Activated CD4-positive, alpha-beta T cell treated with anti-CD3 and anti-CD28 coated beads, Interleukin-2, amount 10 ng/mL, durations not matched to agents 24 days and 14 days (primary cell): ENCODE measurements at regions of chrX and their contacts with region 1.

Region 1: GRCh38 chrX:13051529-13052172 is 7.2 kb upstream of the FAM9C start:
- DNase-seq: peak; percentile 75
- H3K4me3 Mint-ChIP-seq: peak overlapping the region; percentile 39
- H3K27ac Mint-ChIP-seq: peak overlapping the region; percentile 87
- H3K4me1 Mint-ChIP-seq: peaks cover 45% of the 10 kb centered on the region
- H3K27me3 Mint-ChIP-seq: no peaks in the 10 kb centered on the region

Region 2: GRCh38 chrX:12984629-12985319 is 66.9 kb before region 1 on chrX:
- intact Hi-C with region 1: loop called (anchors 2 kb)
- DNase-seq: peak; percentile 90
- H3K4me3 Mint-ChIP-seq: peak overlapping the region; percentile 62
- H3K27ac Mint-ChIP-seq: peak overlapping the region; percentile 94
- H3K4me1 Mint-ChIP-seq: peaks cover 57% of the 10 kb centered on the region
- H3K27me3 Mint-ChIP-seq: no peaks in the 10 kb centered on the region

Region 3: DNA sequence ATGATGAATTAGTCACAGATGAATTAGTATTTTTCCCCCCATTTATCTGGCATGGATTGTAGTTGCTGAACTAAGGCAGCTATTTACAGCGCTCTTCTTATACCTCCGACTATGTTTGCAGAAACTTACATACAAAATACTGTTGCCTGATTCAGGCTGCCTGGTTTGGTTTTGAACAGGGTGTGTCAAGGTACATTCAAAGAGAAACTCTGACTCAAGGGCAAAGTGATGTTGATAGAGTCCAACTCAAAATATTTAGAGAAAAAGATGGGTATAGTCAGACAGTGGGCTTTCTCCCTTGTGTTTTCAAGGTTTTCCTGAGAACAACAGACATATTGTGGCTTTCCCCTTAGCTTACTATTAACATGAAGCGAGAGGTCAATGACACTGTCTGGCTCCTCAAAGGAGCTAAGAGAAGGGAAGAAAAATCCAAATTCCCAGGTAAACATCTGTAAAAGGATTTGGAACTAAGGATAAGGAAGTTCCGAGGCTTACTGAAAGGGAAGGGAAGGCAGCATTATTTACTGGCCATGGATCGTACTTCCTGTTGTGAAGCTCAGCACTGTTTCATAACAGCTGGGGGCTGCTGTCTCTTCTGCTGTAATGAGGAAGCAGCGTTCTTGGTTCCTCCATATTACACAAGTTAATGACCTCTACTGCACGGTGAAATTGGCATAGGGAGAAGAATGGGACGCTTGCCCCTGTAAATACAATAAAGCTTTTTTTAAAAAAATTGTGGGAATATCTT is 38.1 kb before region 1 on chrX:
- intact Hi-C with region 1: loop called (anchors 1 kb)
- DNase-seq: peak; percentile 69
- H3K4me3 Mint-ChIP-seq: peak overlapping the region; percentile 51
- H3K27ac Mint-ChIP-seq: peak overlapping the region; percentile 89
- H3K4me1 Mint-ChIP-seq: peaks cover 49% of the 10 kb centered on the region
- H3K27me3 Mint-ChIP-seq: no peaks in the 10 kb centered on the region

Region 4: GRCh38 chrX:13026877-13027652 is 24.6 kb before region 1 on chrX:
- intact Hi-C with region 1: loop called (anchors 2 kb)
- DNase-seq: peak; percentile 44
- H3K4me3 Mint-ChIP-seq: peak overlapping the region; percentile 10
- H3K27ac Mint-ChIP-seq: peak overlapping the region; percentile 80
- H3K4me1 Mint-ChIP-seq: peaks cover 60% of the 10 kb centered on the region
- H3K27me3 Mint-ChIP-seq: no peaks in the 10 kb centered on the region

Region 5: DNA sequence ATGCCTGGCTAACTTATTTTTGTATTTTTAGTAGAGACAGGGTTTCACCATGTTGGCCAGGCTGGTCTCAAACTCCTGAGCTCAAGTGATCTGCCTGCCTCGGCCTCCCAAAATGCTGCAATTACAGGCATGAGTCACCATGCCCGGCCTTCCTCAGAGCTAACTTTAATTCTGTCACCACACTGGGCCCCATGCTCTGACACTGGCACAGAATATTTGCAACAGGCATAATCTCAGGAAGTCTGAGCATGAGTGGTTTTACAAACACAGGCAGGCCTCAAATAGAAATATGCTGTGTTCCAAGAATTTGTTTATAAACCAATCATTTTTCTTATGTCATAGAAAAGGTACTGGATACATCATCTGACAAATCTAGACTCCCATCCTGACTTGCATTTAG is 25.5 kb after region 1 on chrX:
- intact Hi-C with region 1: loop called (anchors 1 kb)
- DNase-seq: peak; percentile 71
- H3K4me3 Mint-ChIP-seq: no peak overlapping the region
- H3K27ac Mint-ChIP-seq: peak overlapping the region; percentile 88
- H3K4me1 Mint-ChIP-seq: peaks cover 60% of the 10 kb centered on the region
- H3K27me3 Mint-ChIP-seq: no peaks in the 10 kb centered on the region